ENCODE measurements at regions of chr6 and their contacts with region 1.

Region 1: GRCh38 chr6:159017757-159018559 is 18.0 kb upstream of the RSPH3 start:
- DNase-seq: no peak
- ATAC-seq: peak; percentile 92
- H3K4me3 Mint-ChIP-seq: no peak overlapping the region
- H3K27ac Mint-ChIP-seq: peak overlapping the region; percentile 81
- H3K4me1 Mint-ChIP-seq: peaks cover 64% of the 10 kb centered on the region
- H3K27me3 Mint-ChIP-seq: no peaks in the 10 kb centered on the region

Region 2: GRCh38 chr6:158987657-158988056 is 30.3 kb before region 1 on chr6:
- CTCF ChIA-PET with region 1: no interaction called
- POLR2A ChIA-PET with region 1: no interaction called
- intact Hi-C with region 1: no loop called
- DNase-seq: no peak
- ATAC-seq: peak; percentile 54
- H3K4me3 Mint-ChIP-seq: no peak overlapping the region
- H3K27ac Mint-ChIP-seq: no peak overlapping the region
- H3K4me1 Mint-ChIP-seq: peaks cover 29% of the 10 kb centered on the region
- H3K27me3 Mint-ChIP-seq: no peaks in the 10 kb centered on the region

Region 3: DNA sequence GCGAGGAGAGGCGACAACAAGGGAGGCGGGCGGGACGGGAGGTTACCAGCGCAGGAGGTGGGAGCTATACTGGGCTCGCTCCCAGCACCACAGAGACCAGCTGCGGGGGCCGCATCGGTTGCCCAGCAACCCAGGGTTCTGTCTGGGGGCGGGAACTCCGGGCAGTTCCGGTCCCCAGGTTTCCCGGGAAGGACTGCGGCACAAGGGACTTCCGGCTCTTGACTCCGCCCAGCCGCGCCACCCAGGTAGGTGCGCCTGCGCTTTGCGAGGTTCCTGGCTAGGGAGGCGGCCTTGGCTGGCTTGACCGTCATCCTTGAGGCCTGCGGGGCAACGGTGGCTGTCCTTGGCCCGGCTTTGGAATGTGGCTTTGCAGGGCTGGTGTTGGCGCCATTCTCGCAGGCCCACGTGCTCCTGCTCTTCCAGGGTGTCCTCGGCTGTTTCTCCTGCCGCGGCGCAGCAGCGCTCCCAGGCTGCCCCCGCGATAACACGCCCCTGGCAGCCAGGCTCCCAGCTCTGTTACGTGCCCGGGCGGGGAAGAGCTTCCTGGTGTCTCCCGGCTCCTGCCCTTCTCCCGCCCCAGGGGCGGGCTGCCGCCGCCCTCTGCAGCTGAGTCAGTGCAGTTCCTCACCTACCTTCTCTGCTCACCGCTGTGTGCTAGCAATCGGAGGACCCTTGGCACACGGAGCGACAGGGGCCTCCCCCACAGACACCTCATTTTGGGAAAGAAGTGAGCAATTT is 18.1 kb before region 1 on chr6 and contains the start of gene RSPH3:
- CTCF ChIA-PET with region 1: interaction called, 15 read pairs
- POLR2A ChIA-PET with region 1: interaction called, 4 read pairs
- intact Hi-C with region 1: loop called (anchors 1 kb)
- DNase-seq: peak; percentile 97
- ATAC-seq: peak; percentile 86
- H3K4me3 Mint-ChIP-seq: peak within 1 kb of the TSS; percentile 82
- H3K27ac Mint-ChIP-seq: peak within 1 kb of the TSS; percentile 66
- H3K4me1 Mint-ChIP-seq: peaks cover 46% of the 10 kb centered on the region
- H3K27me3 Mint-ChIP-seq: no peaks in the 10 kb centered on the region
- total RNA-seq, gene RSPH3: 6.5 to 9.3 TPM

Region 4: DNA sequence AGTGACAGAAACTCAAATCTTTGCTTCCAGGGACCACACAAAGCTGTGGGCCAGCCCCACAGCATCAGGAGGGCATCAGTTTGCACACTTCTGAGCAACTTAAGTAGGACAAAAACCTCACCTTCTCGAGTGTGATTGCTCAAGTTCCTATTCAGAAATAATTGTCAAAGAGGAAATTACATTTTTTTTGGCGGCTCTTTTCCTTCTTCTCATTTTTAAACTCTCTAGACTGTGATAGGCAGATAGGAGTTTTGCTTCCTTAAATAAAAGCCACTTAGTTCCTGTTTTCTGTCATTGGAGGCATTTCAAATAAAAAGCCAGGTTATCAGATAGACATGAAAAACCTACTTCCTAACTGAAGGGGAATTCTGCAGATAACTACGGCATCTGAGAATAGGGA is 38.0 kb after region 1 on chr6:
- CTCF ChIA-PET with region 1: interaction called, 4 read pairs
- POLR2A ChIA-PET with region 1: interaction called, 6 read pairs
- intact Hi-C with region 1: loop called (anchors 1 to 5 kb)
- DNase-seq: no peak
- ATAC-seq: no peak
- H3K4me3 Mint-ChIP-seq: peak overlapping the region; percentile 13
- H3K27ac Mint-ChIP-seq: peak overlapping the region; percentile 89
- H3K4me1 Mint-ChIP-seq: peaks cover 67% of the 10 kb centered on the region
- H3K27me3 Mint-ChIP-seq: no peaks in the 10 kb centered on the region

Region 5: DNA sequence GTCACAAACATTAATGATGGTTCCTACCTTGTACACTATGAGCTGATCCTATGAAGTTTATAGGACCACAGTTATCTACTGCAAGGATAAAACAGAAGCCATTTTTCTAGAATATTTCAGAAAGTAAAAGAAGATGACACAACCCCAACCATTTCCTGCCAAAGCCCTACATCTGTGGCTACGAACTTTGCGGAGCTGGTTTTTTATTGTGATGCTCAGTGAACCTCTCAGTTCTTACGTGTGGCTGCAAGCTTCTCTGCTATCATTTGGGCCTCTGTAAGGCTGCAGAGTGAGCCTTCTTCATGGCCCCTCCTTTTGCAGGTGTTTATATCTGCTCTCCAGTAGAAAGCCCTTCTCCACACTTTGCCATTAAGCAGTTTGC is 44.6 kb after region 1 on chr6:
- CTCF ChIA-PET with region 1: interaction called, 4 read pairs
- POLR2A ChIA-PET with region 1: interaction called, 6 read pairs
- intact Hi-C with region 1: loop called (anchors 1 to 5 kb)
- DNase-seq: peak; percentile 73
- ATAC-seq: peak; percentile 77
- H3K4me3 Mint-ChIP-seq: peak overlapping the region; percentile 35
- H3K27ac Mint-ChIP-seq: peak overlapping the region; percentile 94
- H3K4me1 Mint-ChIP-seq: peaks cover 99% of the 10 kb centered on the region
- H3K27me3 Mint-ChIP-seq: no peaks in the 10 kb centered on the region

Region 6: DNA sequence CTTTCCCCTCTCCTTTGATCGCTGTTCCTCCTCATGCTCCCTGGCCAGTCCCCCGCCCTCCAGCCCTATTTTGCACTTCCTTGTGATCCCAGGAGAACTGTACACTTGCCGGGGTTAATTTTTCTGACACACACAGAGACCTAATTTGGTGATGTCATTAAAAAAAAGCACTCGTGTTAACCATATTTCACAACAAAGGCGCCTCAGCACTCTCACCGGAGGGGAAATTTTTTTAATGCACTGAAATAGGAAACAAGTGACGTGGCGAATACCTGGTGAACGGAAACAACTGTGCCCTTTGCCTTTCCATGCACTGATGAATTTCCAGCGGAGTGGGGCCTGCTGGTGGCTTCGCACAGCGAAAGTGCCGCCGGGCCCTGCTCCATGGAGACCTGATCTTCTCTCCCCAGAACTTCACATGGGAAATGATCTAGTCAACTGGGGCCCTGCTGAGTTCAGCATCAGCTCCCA is 80.7 kb after region 1 on chr6:
- CTCF ChIA-PET with region 1: interaction called, 413 read pairs
- POLR2A ChIA-PET with region 1: interaction called, 5 read pairs
- intact Hi-C with region 1: loop called in 1 of 2 experiments (anchors 1 kb)
- DNase-seq: peak; percentile 80
- ATAC-seq: peak; percentile 52
- H3K4me3 Mint-ChIP-seq: peak overlapping the region; percentile 54
- H3K27ac Mint-ChIP-seq: peak overlapping the region; percentile 91
- H3K4me1 Mint-ChIP-seq: peaks cover 83% of the 10 kb centered on the region
- H3K27me3 Mint-ChIP-seq: no peaks in the 10 kb centered on the region

Region 7: GRCh38 chr6:159163901-159164370 is 146.0 kb after region 1 on chr6:
- CTCF ChIA-PET with region 1: no interaction called
- POLR2A ChIA-PET with region 1: no interaction called
- intact Hi-C with region 1: no loop called
- DNase-seq: no peak
- ATAC-seq: no peak
- H3K4me3 Mint-ChIP-seq: no peak overlapping the region
- H3K27ac Mint-ChIP-seq: no peak overlapping the region
- H3K4me1 Mint-ChIP-seq: peaks cover 8% of the 10 kb centered on the region
- H3K27me3 Mint-ChIP-seq: peaks cover 54% of the 10 kb centered on the region

Region 8: GRCh38 chr6:159174263-159174969 is 156.5 kb after region 1 on chr6:
- CTCF ChIA-PET with region 1: no interaction called
- POLR2A ChIA-PET with region 1: no interaction called
- intact Hi-C with region 1: no loop called
- DNase-seq: peak; percentile 86
- ATAC-seq: peak; percentile 89
- H3K4me3 Mint-ChIP-seq: no peak overlapping the region
- H3K27ac Mint-ChIP-seq: no peak overlapping the region
- H3K4me1 Mint-ChIP-seq: peaks cover 9% of the 10 kb centered on the region
- H3K27me3 Mint-ChIP-seq: peaks cover 50% of the 10 kb centered on the region